BJ (cell line): ENCODE measurements at regions of chr16 and their contacts with region 1.

Region 1: GRCh38 chr16:89860747-89861304 is 12.6 kb upstream of the TCF25 start:
- DNase-seq: no peak
- H3K4me3 ChIP-seq: no peak overlapping the region
- H3K27me3 ChIP-seq: no peaks in the 10 kb centered on the region
- CTCF ChIP-seq: peak; percentile 99

Region 2: DNA sequence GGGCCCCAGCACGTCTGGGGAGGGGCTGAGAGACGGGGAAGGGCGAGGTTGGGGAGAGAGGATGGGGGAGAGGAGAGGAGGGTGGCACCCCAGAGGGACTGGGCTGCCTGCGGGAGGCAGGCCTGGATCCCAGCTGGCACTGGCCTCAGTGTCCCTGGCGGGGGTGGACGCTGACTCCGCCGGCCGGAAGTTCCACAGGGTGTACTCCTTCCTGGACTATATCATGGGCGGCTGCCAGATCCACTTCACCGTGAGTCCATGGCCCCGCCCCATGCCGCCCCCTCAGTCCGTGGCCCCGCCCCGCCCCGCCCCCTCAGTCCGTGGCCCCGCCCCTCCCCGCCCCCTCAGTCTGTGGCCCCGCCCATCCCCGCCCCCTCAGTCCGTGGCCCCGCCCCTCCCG is 274.0 kb before region 1 on chr16:
- CTCF ChIA-PET with region 1: no interaction called
- POLR2A ChIA-PET with region 1: no interaction called
- DNase-seq: no peak
- H3K4me3 ChIP-seq: no peak overlapping the region
- H3K27me3 ChIP-seq: no peaks in the 10 kb centered on the region
- CTCF ChIP-seq: no peak

Region 3: GRCh38 chr16:89700100-89700648 is 160.7 kb before region 1 on chr16:
- CTCF ChIA-PET with region 1: interaction called, 74 read pairs
- POLR2A ChIA-PET with region 1: no interaction called
- DNase-seq: peak; percentile 81
- H3K4me3 ChIP-seq: peak overlapping the region; percentile 95
- H3K27me3 ChIP-seq: no peaks in the 10 kb centered on the region
- CTCF ChIP-seq: peak; percentile 82

Region 4: GRCh38 chr16:89749647-89750046 is 111.2 kb before region 1 on chr16:
- CTCF ChIA-PET with region 1: interaction called, 59 read pairs
- POLR2A ChIA-PET with region 1: no interaction called
- DNase-seq: no peak
- H3K4me3 ChIP-seq: no peak overlapping the region
- H3K27me3 ChIP-seq: no peaks in the 10 kb centered on the region
- CTCF ChIP-seq: no peak

Region 5: DNA sequence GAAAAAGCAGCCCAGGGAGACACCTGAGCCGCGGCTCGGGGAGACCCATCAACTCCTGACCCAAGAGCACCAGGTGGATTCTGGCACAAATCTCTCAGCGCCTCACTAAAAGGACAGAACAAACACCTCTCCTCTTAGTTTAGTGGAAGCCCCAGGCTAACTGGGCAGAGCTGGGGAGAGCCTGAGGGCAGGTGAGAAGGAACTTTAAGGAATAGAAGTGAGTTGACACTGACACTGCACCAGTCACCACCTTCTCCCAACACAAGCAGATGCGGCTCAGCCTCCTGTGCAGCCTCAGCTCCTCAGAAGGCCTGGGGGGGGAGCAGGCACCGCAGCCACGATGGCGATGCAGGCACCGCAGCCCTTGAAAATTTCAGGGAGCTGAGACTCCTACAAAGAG is 71.8 kb before region 1 on chr16:
- CTCF ChIA-PET with region 1: interaction called, 20 read pairs
- POLR2A ChIA-PET with region 1: no interaction called
- DNase-seq: no peak
- H3K4me3 ChIP-seq: no peak overlapping the region
- H3K27me3 ChIP-seq: no peaks in the 10 kb centered on the region
- CTCF ChIP-seq: no peak

Region 6: GRCh38 chr16:89795676-89796075 is 65.2 kb before region 1 on chr16:
- CTCF ChIA-PET with region 1: interaction called, 20 read pairs
- POLR2A ChIA-PET with region 1: no interaction called
- DNase-seq: no peak
- H3K4me3 ChIP-seq: no peak overlapping the region
- H3K27me3 ChIP-seq: no peaks in the 10 kb centered on the region
- CTCF ChIP-seq: no peak

Region 7: DNA sequence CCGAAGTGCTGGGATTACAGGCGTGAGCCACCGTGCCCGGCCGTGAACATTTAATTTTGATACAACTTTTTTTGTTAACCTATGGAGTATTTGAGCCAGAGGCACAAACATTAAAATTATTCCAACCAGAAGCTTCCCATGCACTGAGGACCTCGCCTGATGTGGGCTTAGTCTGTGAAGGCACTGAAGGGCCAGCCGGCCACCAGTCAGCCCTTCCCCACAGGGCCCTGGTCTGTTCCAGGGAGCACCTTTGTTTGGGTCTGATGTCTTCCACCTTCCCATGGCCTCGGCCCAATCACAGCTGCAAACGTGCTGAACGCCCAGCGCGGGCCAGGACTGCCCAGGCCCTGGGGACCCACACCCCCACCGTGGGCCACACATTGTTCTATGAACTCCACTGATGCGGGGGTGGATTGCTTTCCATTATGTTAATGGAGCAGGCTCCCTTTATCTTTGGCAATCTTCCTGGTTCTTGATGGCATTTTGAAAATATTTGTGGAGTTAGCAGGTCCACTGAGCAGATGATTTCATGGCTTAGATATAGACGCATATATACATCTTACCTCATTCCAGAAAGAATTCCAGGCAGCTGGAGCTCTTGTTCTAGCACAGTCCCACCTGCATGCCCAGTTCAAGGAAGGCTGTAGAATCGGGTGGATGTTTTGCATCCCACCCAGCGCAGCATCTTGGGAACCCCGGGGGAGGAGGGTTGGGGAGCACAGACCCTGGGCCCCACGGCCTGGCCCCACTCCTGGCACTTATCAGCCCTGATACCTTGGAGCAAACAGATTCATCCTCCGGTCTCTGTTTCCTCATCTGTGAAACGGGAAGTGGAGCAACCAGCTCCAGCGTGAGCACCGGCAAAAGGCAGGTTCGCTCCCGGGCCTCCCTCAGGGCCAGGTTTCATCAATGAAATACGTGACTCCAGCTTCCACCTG is 18.1 kb before region 1 on chr16:
- CTCF ChIA-PET with region 1: interaction called, 35 read pairs
- POLR2A ChIA-PET with region 1: no interaction called
- DNase-seq: peak; percentile 39
- H3K4me3 ChIP-seq: no peak overlapping the region
- H3K27me3 ChIP-seq: no peaks in the 10 kb centered on the region
- CTCF ChIP-seq: no peak

Region 8: DNA sequence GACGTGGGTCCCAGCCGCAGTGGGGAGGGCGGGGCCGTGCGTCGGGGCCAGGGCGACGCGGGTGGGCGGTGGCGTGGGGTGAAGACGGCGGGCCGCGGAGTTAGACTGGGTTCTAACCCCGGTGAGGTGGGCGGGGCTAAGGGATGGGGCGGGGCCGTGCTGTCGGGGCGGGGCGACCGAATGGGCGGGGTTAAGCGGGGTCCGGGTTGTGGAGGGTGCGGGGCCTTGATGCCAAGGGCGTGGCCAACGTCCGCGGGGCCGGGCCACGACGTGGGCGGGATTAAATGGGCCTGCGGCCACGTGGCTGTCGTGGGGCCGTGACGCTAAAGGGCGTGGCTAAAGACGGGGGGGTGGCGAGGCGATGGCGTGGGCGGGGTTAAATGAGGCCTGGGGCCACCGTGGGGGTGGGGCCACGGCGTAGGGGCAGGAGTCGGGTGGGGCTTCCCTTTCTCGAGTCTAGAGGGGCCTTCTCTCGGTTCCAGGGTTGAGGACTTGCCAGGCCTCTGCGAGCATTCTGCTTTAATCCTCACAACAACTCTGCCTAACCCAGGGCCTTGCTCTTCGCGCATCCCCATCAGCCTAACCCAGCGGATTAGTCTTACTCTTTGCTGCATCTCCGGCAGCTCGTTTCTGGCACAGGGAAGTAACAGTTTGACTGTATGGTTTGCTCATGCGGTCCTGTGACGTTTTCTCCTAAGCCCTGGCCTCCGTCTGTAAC is 13.3 kb after region 1 on chr16:
- CTCF ChIA-PET with region 1: interaction called, 17 read pairs
- POLR2A ChIA-PET with region 1: no interaction called
- DNase-seq: peak; percentile 61
- H3K4me3 ChIP-seq: peak overlapping the region; percentile 100
- H3K27me3 ChIP-seq: no peaks in the 10 kb centered on the region
- CTCF ChIP-seq: no peak